ENCODE measurements at regions of chr1 and their contacts with region 1.

Region 1: DNA sequence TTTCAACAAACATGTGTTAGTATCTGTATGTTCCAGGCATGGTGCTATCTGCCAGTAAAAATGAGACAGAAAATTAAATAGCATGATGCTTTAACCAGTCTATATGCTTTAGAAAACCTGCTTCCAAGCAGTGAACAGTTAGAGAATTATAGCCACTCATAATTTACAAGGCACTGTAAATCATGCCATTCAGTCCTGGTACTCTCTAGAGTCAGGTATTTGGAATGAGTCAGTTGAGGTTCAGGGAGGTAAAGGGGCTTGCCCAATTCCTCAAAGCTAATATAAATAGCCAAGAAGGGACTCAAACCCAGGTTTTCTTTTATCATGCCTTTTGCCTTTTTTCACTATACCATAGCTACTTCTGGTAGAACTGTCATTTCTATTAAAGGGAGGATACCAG is 184.4 kb downstream of the NFIA start:
- DNase-seq: no peak
- H3K4me3 ChIP-seq: no peak overlapping the region
- H3K27ac ChIP-seq: no peak overlapping the region
- H3K4me1 ChIP-seq: peaks cover 0 to 6% (median 0%) of the 10 kb centered on the region in 4 experiments; a peak in 1 of 7 replicates
- H3K27me3 ChIP-seq: no peaks in the 10 kb centered on the region
- CTCF ChIP-seq: no peak
- EP300 ChIP-seq: no peak
- POLR2A ChIP-seq: no peak
- RAD21 ChIP-seq: no peak

Region 2: DNA sequence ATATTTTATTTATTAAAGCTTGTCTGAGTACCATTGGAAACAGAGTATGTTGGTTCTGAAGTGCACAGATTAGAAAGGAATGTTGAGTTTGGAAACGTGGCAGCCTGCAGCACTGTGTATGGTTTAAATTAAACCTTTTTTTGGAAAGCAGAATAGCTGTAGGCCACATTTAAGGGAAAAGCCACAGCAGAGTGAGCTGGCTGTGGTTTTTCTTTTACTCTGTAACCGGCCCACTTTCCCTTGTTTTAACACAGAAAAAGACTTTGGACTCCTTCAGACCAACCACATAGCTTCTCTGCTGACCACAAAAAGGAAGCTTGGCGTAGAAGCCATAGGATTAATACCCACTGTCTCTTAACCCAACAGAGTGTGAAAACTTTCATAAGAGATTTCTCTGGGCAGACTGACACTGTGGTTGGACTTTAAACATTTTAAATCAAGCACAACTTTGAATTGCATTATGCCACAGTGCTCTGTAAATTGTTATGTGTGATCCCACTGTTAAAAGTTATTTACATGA is 109.2 kb before region 1 on chr1:
- CTCF ChIA-PET with region 1: no interaction called
- POLR2A ChIA-PET with region 1: no interaction called
- DNase-seq: no peak
- H3K4me3 ChIP-seq: no peak overlapping the region
- H3K27ac ChIP-seq: no peak overlapping the region
- H3K4me1 ChIP-seq: peaks cover 0 to 2% (median 0%) of the 10 kb centered on the region in 4 experiments; a peak in 2 of 7 replicates
- H3K27me3 ChIP-seq: no peaks in the 10 kb centered on the region
- CTCF ChIP-seq: no peak
- EP300 ChIP-seq: no peak
- POLR2A ChIP-seq: no peak
- RAD21 ChIP-seq: no peak

Region 3: GRCh38 chr1:61254634-61255357 is 11.9 kb before region 1 on chr1:
- CTCF ChIA-PET with region 1: interaction called, 12 read pairs
- POLR2A ChIA-PET with region 1: no interaction called
- DNase-seq: no peak
- H3K4me3 ChIP-seq: no peak overlapping the region
- H3K27ac ChIP-seq: no peak overlapping the region
- H3K4me1 ChIP-seq: peaks cover 0 to 3% (median under 1%) of the 10 kb centered on the region in 4 experiments; a peak in 3 of 7 replicates
- H3K27me3 ChIP-seq: no peaks in the 10 kb centered on the region
- CTCF ChIP-seq: no peak
- EP300 ChIP-seq: no peak
- POLR2A ChIP-seq: no peak
- RAD21 ChIP-seq: no peak

Region 4: DNA sequence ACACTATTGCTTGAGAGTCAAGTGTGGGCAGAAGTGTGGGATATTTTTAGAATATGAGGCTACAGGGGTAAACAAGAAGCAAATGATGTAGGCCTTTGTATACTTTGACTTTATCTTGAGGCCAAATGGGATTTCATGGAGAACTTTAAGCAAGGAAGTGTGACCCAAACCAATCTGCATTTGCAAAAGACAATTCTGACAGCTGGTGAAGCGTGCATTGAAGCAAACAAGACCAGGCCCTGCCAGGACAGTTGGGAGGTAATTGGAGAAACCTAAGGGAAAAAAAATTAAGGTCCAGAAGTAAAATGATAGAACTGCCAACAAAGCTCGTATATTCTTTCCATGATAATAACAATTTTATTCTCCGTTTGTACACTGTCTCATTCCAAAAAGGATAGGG is 289.9 kb after region 1 on chr1:
- CTCF ChIA-PET with region 1: no interaction called
- POLR2A ChIA-PET with region 1: no interaction called
- DNase-seq: no peak
- H3K4me3 ChIP-seq: no peak overlapping the region
- H3K27ac ChIP-seq: no peak overlapping the region
- H3K4me1 ChIP-seq: no peaks in the 10 kb centered on the region
- H3K27me3 ChIP-seq: no peaks in the 10 kb centered on the region
- CTCF ChIP-seq: no peak
- EP300 ChIP-seq: no peak
- POLR2A ChIP-seq: no peak
- RAD21 ChIP-seq: no peak

Measured in H1 (cell line).